ENCODE measurements at regions of chr17 and their contacts with region 1.

Region 1: DNA sequence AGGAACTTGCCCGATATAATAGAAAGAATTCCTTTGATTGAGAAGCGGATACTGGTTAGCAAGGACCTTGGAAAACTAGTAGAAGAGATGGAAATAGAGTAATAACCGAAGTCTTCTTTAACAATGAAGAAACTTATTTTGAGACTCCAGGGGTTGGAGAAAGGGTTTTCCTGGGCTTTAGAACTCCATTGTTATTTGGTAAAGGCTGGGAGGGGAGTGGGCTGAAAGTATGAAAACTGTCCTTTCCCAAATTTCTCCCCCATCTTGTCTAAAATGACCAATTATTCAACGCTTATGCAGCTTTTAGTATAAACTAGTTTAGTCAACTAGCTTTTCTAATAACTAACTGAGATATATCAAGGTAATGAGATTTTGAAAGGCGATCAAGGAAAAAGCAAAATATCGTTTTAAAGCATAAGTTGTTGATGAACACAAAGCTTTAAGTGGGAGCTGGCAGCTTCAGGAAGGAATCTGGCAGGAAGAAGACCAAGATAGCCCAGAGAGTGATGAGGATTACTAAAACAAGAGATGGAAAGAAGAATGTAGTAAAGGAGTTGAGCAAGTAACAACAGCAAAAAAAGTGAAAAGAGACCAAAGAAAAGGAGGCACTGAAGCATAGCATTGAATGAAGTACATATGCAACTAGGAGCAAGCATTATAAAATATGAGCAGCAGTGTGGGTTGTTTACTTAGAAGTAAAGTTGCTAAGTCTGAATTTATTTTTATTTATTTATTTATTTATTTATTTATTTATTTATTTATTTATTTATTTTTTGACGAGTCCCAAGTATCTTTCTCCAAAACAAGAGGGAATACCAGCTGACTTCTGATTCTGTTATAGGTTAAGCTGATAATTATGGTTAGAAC is 66.2 kb downstream of the PPM1E start:
- DNase-seq: no peak
- ATAC-seq: no peak

Region 2: GRCh38 chr17:58741121-58741625 is 80.7 kb before region 1 on chr17:
- intact Hi-C with region 1: loop called (anchors 2 kb)
- DNase-seq: no peak
- ATAC-seq: no peak

Region 3: GRCh38 chr17:58764373-58764772 is 57.5 kb before region 1 on chr17:
- intact Hi-C with region 1: no loop called
- DNase-seq: no peak
- ATAC-seq: no peak

Measured in sciatic nerve (tissue), 2 donors.